ENCODE measurements at regions of chr17 and their contacts with region 1.

Region 1: GRCh38 chr17:58517734-58518609 is 3.5 kb upstream of the MTMR4 start:
- DNase-seq: peak; percentile 100
- H3K4me3 Mint-ChIP-seq: peak overlapping the region; percentile 90
- H3K27ac Mint-ChIP-seq: peak overlapping the region; percentile 97
- H3K4me1 Mint-ChIP-seq: peaks cover 50% of the 10 kb centered on the region
- H3K27me3 Mint-ChIP-seq: no peaks in the 10 kb centered on the region

Region 2: DNA sequence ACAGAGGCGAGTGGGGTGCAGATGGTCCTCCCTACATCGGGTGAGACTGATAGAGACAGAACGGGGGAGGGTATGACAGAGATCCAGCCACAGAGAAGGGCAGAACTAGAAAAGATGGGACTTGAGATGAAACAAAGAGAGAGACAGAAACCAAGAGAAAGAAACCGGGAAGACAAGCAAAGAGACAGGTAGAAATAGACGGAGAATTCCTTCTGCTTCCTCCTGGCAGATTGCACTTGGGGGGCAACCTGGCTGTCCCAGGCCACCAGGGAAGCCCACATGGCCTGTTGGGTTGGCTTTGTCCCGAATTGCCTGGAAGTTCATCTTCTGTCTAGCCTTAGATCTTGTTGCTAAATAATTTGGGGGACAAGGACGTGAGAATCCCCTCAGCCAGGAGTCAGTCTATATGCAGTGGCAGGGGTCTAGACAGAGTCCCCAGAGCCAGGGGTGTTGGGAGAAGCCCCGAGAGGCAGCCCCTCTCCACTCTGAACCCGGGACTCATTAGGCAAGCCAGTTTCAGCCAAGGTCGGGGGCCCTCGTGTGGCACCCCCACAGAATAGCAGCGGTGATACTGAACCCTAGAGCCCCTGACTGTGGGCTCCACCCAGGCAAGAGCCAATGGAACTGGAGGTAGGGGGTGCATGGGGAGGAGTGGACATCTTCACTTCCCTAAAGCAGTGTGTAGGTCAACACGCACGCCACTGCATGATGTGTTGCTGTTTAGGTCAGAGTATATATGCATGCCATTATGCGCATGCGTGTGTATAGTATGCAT is 188.8 kb before region 1 on chr17:
- CTCF ChIA-PET with region 1: no interaction called
- POLR2A ChIA-PET with region 1: interaction called, 12 read pairs
- DNase-seq: peak; percentile 85
- H3K4me3 Mint-ChIP-seq: peak overlapping the region; percentile 98
- H3K27ac Mint-ChIP-seq: peak overlapping the region; percentile 99
- H3K4me1 Mint-ChIP-seq: peaks cover 37% of the 10 kb centered on the region
- H3K27me3 Mint-ChIP-seq: peaks cover 2% of the 10 kb centered on the region

Region 3: GRCh38 chr17:58463821-58464220 is 54.2 kb before region 1 on chr17:
- CTCF ChIA-PET with region 1: no interaction called
- POLR2A ChIA-PET with region 1: no interaction called
- DNase-seq: no peak
- H3K4me3 Mint-ChIP-seq: no peak overlapping the region
- H3K27ac Mint-ChIP-seq: no peak overlapping the region
- H3K4me1 Mint-ChIP-seq: no peaks in the 10 kb centered on the region
- H3K27me3 Mint-ChIP-seq: no peaks in the 10 kb centered on the region

Region 4: DNA sequence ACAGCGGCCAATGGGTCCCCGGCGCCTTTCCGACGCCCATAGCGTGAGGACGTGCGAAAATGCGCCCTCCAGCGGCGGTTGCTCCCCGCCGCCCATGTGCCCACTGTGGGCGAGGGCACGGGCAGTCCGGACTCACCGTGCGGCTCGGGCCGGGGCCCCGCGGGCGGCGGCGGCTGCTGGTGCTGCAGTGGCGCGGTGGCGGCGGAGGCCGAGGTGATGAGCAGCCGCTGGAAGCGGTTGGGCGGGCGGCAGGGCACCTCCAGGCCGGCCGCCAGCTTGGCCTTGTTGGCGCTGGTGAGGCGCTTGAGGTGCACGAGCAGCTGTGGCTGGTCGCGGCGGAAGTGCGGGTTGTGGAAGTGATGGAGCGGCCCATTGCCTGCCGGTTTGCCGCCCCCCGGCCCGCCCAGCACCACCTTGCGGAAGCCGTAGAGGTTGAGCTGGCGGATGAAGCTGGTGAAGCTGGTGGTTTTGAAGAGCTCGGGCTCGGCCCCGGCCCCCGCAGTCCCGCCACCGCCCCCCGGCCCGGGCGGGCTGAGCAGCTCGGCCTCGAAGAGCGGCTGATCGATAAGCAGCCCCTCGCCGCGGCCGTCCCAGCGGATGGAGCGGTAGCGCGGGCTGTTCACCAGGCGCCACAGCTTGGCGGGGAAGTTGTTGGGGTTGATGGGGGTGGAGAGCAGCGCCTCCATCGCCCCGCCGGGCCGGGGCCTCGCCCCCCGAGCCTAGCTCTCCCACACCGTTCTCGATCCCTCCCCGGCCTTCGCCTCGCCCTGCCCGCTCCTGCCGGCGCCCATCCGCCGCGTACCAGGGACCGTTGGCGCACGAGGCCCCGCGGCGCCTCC is 30.2 kb before region 1 on chr17 and contains the start of gene HSF5:
- CTCF ChIA-PET with region 1: interaction called, 17 read pairs
- POLR2A ChIA-PET with region 1: interaction called, 9 read pairs
- DNase-seq: peak; percentile 75
- H3K4me3 Mint-ChIP-seq: peak within 1 kb of the TSS; percentile 30
- H3K27ac Mint-ChIP-seq: no peak within 1 kb of the TSS
- H3K4me1 Mint-ChIP-seq: peaks cover 17% of the 10 kb centered on the region
- H3K27me3 Mint-ChIP-seq: no peaks in the 10 kb centered on the region
- total RNA-seq, gene HSF5: 0.40 to 0.70 TPM

Region 5: GRCh38 chr17:58658804-58659713 is 141.1 kb after region 1 on chr17:
- CTCF ChIA-PET with region 1: interaction called, 3 read pairs
- POLR2A ChIA-PET with region 1: interaction called, 22 read pairs
- DNase-seq: peak; percentile 83
- H3K4me3 Mint-ChIP-seq: peak overlapping the region; percentile 70
- H3K27ac Mint-ChIP-seq: peak overlapping the region; percentile 94
- H3K4me1 Mint-ChIP-seq: peaks cover 26% of the 10 kb centered on the region
- H3K27me3 Mint-ChIP-seq: peaks cover 13% of the 10 kb centered on the region

Region 6: GRCh38 chr17:59004338-59005111 is 486.6 kb after region 1 on chr17:
- CTCF ChIA-PET with region 1: interaction called, 28 read pairs
- POLR2A ChIA-PET with region 1: interaction called, 7 read pairs
- DNase-seq: peak; percentile 76
- H3K4me3 Mint-ChIP-seq: no peak overlapping the region
- H3K27ac Mint-ChIP-seq: peak overlapping the region; percentile 0
- H3K4me1 Mint-ChIP-seq: peaks cover 33% of the 10 kb centered on the region
- H3K27me3 Mint-ChIP-seq: no peaks in the 10 kb centered on the region